ENCODE measurements at regions of chr10 and their contacts with region 1.

Region 1: DNA sequence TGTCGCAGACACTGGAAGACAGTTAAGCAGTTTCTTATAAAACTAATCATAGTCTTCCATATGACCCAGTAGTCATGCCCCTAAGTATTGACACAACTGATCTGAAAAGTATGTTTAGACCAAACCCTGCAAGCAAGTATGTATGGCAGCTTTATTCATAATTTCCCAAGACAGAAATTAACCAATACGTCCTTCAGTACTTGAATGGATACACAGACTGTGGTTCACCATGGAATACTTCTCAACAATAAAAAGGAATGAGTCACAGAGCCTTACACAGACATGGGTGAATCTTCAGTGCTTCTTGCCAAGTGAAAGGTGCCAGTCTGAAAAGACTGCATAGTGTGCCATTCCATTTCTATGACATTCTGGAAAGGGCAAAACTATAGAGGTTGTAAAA is 50.2 kb upstream of the AKR1E2 start:
- DNase-seq: no peak
- H3K4me3 Mint-ChIP-seq: no peak overlapping the region
- H3K27ac Mint-ChIP-seq: peak overlapping the region; percentile 80
- H3K4me1 Mint-ChIP-seq: peaks cover 14% of the 10 kb centered on the region
- H3K27me3 Mint-ChIP-seq: peaks cover 26% of the 10 kb centered on the region

Region 2: GRCh38 chr10:4725917-4726606 is 49.7 kb before region 1 on chr10:
- CTCF ChIA-PET with region 1: no interaction called
- POLR2A ChIA-PET with region 1: interaction called, 3 read pairs
- intact Hi-C with region 1: loop called (anchors 1 kb)
- DNase-seq: no peak
- H3K4me3 Mint-ChIP-seq: no peak overlapping the region
- H3K27ac Mint-ChIP-seq: no peak overlapping the region
- H3K4me1 Mint-ChIP-seq: peaks cover 9% of the 10 kb centered on the region
- H3K27me3 Mint-ChIP-seq: peaks cover 8% of the 10 kb centered on the region

Measured in activated CD4-positive, alpha-beta memory T cell treated with anti-CD3 and anti-CD28 coated beads for 36 hours (primary cell).